MCF 10A (cell line): ENCODE measurements at regions of chr19 and their contacts with region 1.

Region 1: DNA sequence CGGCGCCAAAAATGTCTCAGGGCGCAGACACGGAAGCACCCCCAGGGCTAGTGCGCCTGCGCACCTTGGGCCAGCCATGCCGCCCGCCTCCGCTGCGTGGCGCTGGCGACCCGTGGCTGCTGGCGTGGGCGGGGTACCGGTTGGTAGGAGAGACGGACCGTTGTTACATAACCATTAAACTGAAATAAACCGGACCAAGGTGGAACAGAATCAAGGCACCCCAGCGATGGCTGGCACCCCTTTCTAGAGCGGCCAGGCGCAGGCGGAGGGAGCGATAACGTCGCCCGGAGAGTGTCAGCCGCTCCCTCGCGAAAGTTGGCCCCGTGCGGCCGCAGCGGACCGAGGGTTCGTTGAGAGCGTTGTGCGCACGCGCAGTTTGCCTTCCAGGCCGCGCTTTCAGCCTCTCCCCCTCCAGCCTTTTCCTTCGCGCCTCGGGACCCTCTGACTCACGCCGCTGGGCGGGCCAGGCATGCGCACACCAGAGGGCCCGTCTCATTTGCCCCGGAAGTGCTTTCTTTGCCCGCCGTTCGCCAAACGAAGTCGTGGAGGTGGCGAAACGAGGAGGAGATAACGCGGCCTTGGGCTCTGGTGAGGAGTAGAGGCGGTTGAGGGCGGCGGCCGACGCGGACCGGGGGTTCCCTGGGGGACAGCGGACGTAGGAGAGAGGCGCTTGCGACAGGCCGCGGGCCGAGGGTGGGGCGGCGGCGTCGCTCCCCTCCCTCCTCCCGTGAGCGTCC is at the starts of genes PLEKHJ1 and SF3A2:
- DNase-seq: peak; percentile 98
- H3K4me3 Mint-ChIP-seq: peak within 1 kb of the TSS; percentile 86
- H3K27ac Mint-ChIP-seq: peak within 1 kb of the TSS; percentile 99
- H3K4me1 Mint-ChIP-seq: peaks cover 23% of the 10 kb centered on the region
- H3K27me3 Mint-ChIP-seq: no peaks in the 10 kb centered on the region
- CTCF ChIP-seq: peak; percentile 98
- total RNA-seq, gene PLEKHJ1: 44.3 and 54.1 TPM in 2 replicates
- total RNA-seq, gene SF3A2: 101 and 119 TPM in 2 replicates

Region 2: DNA sequence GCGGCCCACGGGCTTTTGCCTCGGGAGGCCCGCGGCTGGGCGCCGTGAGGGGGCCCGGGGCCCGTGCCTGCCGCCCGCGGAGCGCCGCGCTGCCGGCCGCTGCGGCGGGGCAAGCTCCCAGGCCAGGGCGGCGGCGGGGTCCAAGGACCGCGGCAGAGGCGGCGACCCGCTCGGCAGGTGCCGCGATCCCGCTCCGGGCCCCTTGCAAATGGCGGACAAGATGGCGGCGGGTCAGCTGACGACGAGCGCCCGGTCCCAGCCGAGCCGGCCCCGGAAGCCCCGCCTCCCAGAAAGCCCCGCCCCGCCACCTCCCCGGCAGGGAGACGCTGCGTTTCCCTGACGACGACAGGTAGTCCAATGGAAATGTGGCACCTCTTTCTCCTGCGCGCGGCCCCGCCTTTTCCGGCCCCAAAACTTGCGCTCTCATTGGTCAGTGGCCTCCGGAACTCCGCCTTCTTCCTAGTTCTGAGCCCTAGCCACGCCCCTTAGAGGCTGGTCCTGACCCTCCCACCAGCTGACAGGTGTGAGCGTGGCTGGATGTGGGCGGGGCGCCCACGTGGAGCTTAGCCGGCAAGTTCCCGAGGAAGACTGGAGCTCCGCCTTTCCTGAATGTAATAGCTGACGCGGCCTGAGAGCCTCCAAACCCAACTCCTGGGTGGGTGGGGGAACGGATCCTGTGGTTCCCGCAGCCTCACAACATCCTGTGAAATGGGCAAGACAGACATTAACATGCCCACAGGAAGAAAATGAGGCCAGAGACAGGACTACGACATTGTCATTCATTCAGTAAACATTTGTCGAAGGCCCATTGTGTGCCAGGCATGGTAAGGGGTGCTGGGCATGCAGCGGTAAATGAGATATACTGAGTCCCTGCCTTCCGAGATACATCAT is 84.9 kb before region 1 on chr19 and contains the start of gene AP3D1:
- CTCF ChIA-PET with region 1: interaction called, 6 read pairs
- POLR2A ChIA-PET with region 1: interaction called, 11 read pairs
- intact Hi-C with region 1: loop called (anchors 1 kb)
- DNase-seq: peak; percentile 100
- H3K4me3 Mint-ChIP-seq: peak within 1 kb of the TSS; percentile 78
- H3K27ac Mint-ChIP-seq: peak within 1 kb of the TSS; percentile 55
- H3K4me1 Mint-ChIP-seq: peaks cover 16% of the 10 kb centered on the region
- H3K27me3 Mint-ChIP-seq: no peaks in the 10 kb centered on the region
- CTCF ChIP-seq: no peak
- total RNA-seq, gene AP3D1: 172 and 181 TPM in 2 replicates

Region 3: DNA sequence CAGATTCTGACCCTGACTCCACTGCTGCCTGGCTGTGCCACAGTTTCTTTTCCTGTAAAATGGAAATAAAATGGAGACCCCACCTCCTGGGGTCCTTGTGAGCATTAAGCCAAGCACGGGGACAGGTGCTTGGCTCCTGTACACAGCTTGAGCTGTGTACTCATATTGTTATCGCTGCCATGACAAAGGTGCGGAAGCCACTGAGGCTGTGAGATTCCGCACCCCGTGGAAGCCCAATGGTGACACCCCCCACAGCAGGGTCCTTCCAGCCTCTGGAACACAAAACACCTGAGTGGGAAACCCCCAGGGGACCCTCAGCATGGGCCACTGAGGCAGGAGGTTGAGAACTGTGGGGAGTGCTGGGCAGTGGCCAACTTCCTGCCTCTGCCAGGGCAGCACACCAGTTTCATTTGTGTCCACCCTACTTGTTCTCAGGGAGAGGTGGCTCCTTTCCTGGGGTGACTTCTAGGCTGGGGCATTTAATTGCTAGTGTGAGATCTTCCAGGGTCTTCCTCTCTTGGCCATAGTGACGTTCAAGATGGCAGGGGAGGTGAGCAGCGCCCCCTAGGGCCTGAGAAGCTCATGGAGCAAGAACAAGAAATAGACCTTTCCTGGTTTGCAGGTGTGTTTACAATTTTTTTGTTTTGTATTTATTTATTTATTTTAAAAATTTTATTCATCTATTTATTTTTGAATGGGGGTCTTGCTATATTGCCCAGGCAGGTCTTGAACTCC is 25.1 kb after region 1 on chr19:
- CTCF ChIA-PET with region 1: interaction called, 6 read pairs
- POLR2A ChIA-PET with region 1: interaction called, 32 read pairs
- intact Hi-C with region 1: no loop called
- DNase-seq: no peak
- H3K4me3 Mint-ChIP-seq: no peak overlapping the region
- H3K27ac Mint-ChIP-seq: no peak overlapping the region
- H3K4me1 Mint-ChIP-seq: peaks cover 11% of the 10 kb centered on the region
- H3K27me3 Mint-ChIP-seq: no peaks in the 10 kb centered on the region
- CTCF ChIP-seq: peak; percentile 67

Region 4: GRCh38 chr19:2269244-2269947 is 32.9 kb after region 1 on chr19:
- CTCF ChIA-PET with region 1: interaction called, 20 read pairs
- POLR2A ChIA-PET with region 1: interaction called, 79 read pairs
- intact Hi-C with region 1: loop called (anchors 1 kb)
- DNase-seq: peak; percentile 97
- H3K4me3 Mint-ChIP-seq: peak overlapping the region; percentile 91
- H3K27ac Mint-ChIP-seq: peak overlapping the region; percentile 88
- H3K4me1 Mint-ChIP-seq: peaks cover 26% of the 10 kb centered on the region
- H3K27me3 Mint-ChIP-seq: no peaks in the 10 kb centered on the region
- CTCF ChIP-seq: no peak

Region 5: DNA sequence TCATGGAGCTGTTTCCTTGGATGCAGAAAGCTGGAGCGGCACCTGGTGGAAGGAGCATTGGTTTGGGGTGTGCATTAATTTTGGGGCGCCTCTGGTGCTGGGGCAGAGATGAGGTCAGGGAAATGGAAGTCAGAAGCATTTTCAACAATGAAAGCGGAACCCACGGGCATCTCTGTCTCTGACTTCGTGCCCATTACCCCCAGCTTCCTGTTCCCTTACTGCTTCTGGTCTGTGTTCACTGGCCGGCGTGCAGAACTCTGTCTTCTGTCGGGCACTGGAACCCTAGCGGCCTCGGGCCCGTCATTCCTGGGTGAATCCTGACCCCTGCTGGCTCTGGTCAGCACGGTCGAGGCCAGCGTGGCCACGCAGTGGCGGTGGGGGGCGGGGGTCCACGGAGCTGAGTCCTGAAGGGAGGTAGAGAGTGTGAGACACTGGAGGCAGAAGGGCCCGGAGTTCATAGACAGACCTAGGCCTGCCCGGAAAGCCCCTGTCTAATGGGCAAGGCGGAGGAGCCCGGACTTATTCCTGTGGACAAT is 79.4 kb after region 1 on chr19:
- CTCF ChIA-PET with region 1: interaction called, 3 read pairs
- POLR2A ChIA-PET with region 1: no interaction called
- intact Hi-C with region 1: loop called (anchors 5 kb)
- DNase-seq: no peak
- H3K4me3 Mint-ChIP-seq: no peak overlapping the region
- H3K27ac Mint-ChIP-seq: no peak overlapping the region
- H3K4me1 Mint-ChIP-seq: no peaks in the 10 kb centered on the region
- H3K27me3 Mint-ChIP-seq: no peaks in the 10 kb centered on the region
- CTCF ChIP-seq: peak; percentile 7